ENCODE measurements at regions of chr10 and their contacts with region 1.

Region 1: DNA sequence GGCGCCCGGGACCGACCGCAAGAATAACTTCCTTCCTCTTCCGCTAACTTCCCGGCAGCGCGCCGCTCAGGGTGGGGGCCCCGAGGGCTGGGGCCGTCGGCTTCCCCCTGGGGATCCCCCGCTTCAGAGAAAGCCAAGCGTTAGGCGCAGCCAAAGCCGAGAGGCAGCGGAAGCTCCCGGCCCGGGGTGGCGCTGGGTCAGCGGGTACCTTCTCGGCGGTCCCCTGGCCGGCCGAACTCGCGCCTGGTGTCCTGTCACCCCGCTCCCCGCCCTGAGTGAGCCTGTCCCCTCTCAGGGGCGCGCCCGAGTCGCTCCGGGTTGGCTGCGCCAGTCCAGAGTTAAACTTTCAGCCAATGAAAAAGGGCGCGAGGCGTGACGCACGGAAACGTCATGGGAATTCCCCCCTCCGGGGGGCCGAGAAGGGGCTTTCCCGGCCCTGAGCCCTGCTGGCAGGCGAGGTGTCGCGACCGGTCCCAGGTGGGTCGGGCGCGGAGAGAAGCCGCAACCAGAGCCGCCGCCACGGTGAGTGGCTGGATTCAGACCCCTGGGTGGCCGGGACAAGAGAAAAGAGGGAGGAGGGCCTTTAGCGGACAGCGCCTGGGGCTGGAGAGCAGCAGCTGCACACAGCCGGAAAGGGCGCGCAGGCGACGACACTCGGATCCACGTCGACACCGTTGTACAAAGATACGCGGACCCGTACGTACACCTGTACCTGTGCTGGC is 1.3 kb upstream of the NFKB2 start:
- DNase-seq: peak; percentile 99
- H3K4me3 Mint-ChIP-seq: peak overlapping the region; percentile 90
- H3K27ac Mint-ChIP-seq: peak overlapping the region; percentile 97
- H3K4me1 Mint-ChIP-seq: peaks cover 47% of the 10 kb centered on the region
- H3K27me3 Mint-ChIP-seq: no peaks in the 10 kb centered on the region

Region 2: GRCh38 chr10:102151774-102152544 is 242.3 kb before region 1 on chr10 and contains the start of gene NOLC1:
- intact Hi-C with region 1: loop called (anchors 1 kb)
- DNase-seq: peak; percentile 100
- H3K4me3 Mint-ChIP-seq: peak within 1 kb of the TSS; percentile 98
- H3K27ac Mint-ChIP-seq: peak within 1 kb of the TSS; percentile 98
- H3K4me1 Mint-ChIP-seq: peaks cover 28% of the 10 kb centered on the region
- H3K27me3 Mint-ChIP-seq: no peaks in the 10 kb centered on the region
- total RNA-seq, gene NOLC1: 260 and 271 TPM in 2 replicates

Region 3: GRCh38 chr10:102225646-102226541 is 168.3 kb before region 1 on chr10 and contains the start of gene ELOVL3:
- intact Hi-C with region 1: loop called (anchors 1 kb)
- DNase-seq: peak; percentile 87
- H3K4me3 Mint-ChIP-seq: peak within 1 kb of the TSS; percentile 63
- H3K27ac Mint-ChIP-seq: no peak within 1 kb of the TSS
- H3K4me1 Mint-ChIP-seq: peaks cover 21% of the 10 kb centered on the region
- H3K27me3 Mint-ChIP-seq: peaks cover 57% of the 10 kb centered on the region
- total RNA-seq, gene ELOVL3: 0.18 TPM in 1 of 2 replicates, not detected in the other

Region 4: GRCh38 chr10:102408728-102409603 is 14.7 kb after region 1 on chr10:
- intact Hi-C with region 1: loop called (anchors 1 kb)
- DNase-seq: peak; percentile 64
- H3K4me3 Mint-ChIP-seq: peak overlapping the region; percentile 87
- H3K27ac Mint-ChIP-seq: peak overlapping the region; percentile 81
- H3K4me1 Mint-ChIP-seq: peaks cover 54% of the 10 kb centered on the region
- H3K27me3 Mint-ChIP-seq: peaks cover 24% of the 10 kb centered on the region

Region 5: DNA sequence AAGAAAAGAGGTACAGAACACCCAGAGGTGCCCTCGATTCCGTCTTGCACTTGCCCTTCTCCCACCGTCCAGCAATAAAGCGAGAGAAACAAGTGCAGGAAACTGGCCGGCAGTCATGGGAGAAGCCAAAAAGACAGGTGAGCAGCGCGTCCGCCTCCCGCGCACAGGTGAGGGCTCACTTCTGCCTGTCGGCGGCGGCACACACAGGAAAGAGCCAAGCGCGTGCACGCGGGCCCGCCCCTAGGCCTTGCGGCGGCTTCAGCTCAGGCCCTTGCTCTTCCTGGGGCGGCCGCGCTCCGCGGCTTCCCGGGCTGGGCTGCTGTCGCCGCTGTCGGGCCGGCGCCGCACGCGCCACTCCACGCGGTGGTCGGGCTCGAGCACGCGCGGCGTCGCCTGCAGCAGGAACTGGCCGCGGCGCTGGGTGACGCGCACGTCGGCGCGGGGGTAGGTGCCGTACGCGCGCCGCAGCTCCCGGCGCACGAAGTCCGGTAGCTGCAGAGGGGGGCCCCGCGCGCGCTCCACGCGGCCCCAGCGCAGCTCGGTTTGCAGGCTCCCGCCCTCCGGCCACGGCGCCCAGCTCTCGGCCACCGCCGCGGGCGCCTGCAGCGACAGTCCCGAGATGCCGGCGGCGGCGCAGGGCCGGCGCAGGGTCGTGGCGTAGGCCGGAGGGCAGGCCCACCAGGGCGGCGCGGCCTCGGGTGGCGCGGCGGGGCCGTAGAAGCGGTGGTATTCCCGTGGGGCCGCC is 56.1 kb after region 1 on chr10:
- intact Hi-C with region 1: loop called (anchors 1 kb)
- DNase-seq: peak; percentile 88
- H3K4me3 Mint-ChIP-seq: peak overlapping the region; percentile 95
- H3K27ac Mint-ChIP-seq: peak overlapping the region; percentile 90
- H3K4me1 Mint-ChIP-seq: peaks cover 33% of the 10 kb centered on the region
- H3K27me3 Mint-ChIP-seq: no peaks in the 10 kb centered on the region

Region 6: DNA sequence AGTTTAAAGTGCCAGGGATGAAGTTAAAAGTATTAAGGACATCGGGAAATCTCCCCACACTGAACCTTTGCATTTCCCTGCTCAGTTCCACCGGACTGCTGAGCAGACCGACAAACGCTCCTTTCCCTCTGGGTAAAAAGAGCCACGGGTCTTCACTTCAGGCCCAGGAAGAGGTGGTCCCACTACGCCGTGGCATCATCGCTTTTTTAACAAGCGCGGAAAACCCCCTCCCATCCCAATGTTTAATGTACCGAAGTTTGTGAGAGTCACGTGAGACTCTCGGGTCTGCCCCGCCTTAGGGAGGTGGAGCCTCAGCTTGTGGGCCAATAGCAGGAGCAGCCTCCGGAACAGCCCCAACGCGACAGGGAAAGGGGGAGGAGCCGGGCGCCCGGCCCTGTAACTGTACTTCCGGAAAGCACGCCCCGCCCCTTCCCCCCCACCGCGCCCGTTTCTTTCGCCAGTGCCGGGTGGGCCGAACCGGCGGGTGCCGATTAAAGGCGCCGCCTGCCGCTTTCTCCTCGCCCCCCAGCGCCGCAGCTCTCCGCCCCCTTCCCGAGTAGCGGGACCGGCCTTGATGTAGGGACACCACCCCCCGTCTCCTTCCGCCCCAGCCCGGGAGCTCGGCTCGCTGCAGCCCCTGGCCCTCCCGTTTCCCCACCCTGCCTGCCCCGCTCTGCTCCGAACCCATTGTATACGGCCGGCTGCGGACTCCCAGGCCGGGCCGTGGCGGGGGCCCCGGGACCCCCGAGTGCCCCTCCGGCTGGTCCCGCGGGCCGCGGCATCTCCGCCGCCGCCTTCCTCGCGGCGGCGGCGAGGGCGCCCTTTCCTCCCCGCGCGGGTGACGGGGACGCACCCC is 247.9 kb after region 1 on chr10:
- intact Hi-C with region 1: loop called (anchors 1 kb)
- DNase-seq: peak; percentile 94
- H3K4me3 Mint-ChIP-seq: peak overlapping the region; percentile 90
- H3K27ac Mint-ChIP-seq: peak overlapping the region; percentile 82
- H3K4me1 Mint-ChIP-seq: peaks cover 19% of the 10 kb centered on the region
- H3K27me3 Mint-ChIP-seq: no peaks in the 10 kb centered on the region

Measured in activated T-helper 1 cell treated with anti-CD3 and anti-CD28 coated beads, Interleukin-12 subunit alpha, Interleukin-12 subunit beta, Interleukin-2, Interleukin-4 antibody, amounts not matched to agents 30 ng/mL and 10 ng/mL and 1 ng/mL, durations not matched to agents 14 hours and 24 hours and 36 hours (primary cell).